ENCODE measurements at regions of chr1 and their contacts with region 1.

Region 1: GRCh38 chr1:70247768-70248167 is 26.6 kb downstream of the SRSF11 start:
- DNase-seq: no peak
- H3K4me3 ChIP-seq: no peak overlapping the region
- H3K27ac ChIP-seq: no peak overlapping the region
- H3K4me1 ChIP-seq: no peaks in the 10 kb centered on the region
- H3K27me3 ChIP-seq: no peaks in the 10 kb centered on the region
- CTCF ChIP-seq: no peak
- EP300 ChIP-seq: no peak
- POLR2A ChIP-seq: no peak
- RAD21 ChIP-seq: no peak

Region 2: GRCh38 chr1:70234733-70235132 is 13.0 kb before region 1 on chr1:
- CTCF ChIA-PET with region 1: no interaction called
- POLR2A ChIA-PET with region 1: interaction called, 20 read pairs
- DNase-seq: no peak
- H3K4me3 ChIP-seq: no peak overlapping the region
- H3K27ac ChIP-seq: no peak overlapping the region
- H3K4me1 ChIP-seq: no peaks in the 10 kb centered on the region
- H3K27me3 ChIP-seq: no peaks in the 10 kb centered on the region
- CTCF ChIP-seq: no peak
- EP300 ChIP-seq: no peak
- POLR2A ChIP-seq: no peak
- RAD21 ChIP-seq: no peak